Aorta (tissue), 5 donors: ENCODE measurements at regions of chr1 and their contacts with region 1.

Region 1: DNA sequence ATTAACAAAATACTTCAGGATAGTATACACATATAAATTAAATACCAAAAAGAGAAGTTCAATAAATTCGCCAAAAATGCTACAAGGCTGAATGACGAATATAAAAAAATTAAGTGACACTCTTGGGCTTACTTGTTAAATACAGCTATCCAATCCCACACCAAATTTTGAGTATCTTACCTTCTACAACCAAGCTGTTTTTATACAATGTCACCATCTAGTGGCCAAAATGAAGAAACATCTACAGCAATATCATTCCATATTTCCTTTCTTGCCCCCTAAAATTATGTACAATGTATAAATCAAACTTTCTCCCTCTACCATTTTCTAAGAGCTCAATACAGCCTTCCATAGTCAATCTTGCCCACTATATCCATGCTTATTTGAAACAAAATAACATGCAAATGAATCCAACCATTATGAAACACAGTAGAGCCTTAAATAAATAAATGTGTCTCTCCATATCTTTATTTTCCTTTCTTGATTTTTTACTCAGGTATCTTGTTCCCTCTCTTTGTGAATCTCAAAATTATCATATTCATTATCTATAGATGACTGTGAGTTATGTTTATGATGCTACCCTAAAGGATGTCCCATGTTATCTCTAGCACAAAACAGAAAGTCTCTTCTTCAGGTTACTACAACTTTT is 86.3 kb downstream of the ACBD6 start:
- DNase-seq: no peak
- ATAC-seq: no peak
- H3K4me3 ChIP-seq: no peak overlapping the region
- H3K27ac ChIP-seq: no peak overlapping the region
- H3K4me1 ChIP-seq: no peaks in the 10 kb centered on the region
- H3K27me3 ChIP-seq: no peaks in the 10 kb centered on the region

Region 2: DNA sequence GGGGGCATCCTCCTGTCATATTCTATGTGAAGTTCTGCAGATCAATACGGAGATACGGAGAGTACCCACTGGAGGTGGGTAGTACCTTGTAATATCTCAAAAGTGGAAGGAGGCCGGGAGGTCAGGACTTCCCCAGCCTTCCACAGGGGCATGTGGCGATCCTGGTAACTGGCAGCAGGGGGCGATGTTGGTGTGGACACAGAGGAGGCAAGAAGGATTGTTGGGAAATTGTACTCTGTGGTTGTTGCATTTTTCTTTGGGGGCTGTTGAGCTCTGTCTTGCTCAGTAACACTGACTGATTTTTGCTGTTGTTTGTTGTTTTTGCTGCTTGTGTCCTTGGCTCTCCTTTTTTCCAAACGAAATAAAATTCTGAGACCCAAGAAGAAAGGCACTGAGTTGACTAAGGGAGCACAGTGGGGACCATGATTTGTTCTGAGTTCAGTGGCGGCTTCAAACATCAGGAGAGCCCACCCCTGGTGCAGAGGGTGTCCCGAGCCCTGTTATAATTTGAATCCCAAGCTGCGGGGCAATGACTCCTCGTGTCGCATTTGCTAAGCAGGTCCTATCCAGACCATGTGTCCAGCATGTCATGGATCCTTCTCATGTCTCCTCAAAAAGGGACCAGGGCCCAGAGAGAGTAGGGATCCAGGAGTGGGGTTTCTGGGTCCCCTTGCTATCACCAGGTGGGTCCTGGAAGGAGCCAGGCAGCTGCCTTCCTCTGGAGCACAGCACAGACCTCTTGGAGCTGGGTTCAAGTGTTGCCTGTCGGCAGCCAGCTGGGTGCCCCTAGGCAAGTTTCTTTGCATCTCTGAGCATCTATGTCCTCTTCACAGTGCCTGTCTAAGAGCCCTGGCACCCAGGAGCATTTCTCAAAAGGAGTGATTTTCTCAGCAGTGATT is 163.2 kb before region 1 on chr1:
- intact Hi-C with region 1: loop called in 1 of 2 experiments (anchors 2 kb)
- DNase-seq: peak; percentile 87 to 88
- ATAC-seq: no peak
- H3K4me3 ChIP-seq: no peak overlapping the region
- H3K27ac ChIP-seq: no peak overlapping the region
- H3K4me1 ChIP-seq: no peaks in the 10 kb centered on the region
- H3K27me3 ChIP-seq: no peaks in the 10 kb centered on the region

Region 3: GRCh38 chr1:180527101-180527669 is 111.1 kb after region 1 on chr1:
- intact Hi-C with region 1: no loop called
- DNase-seq: no peak
- ATAC-seq: no peak
- H3K4me3 ChIP-seq: no peak overlapping the region
- H3K27ac ChIP-seq: peak overlapping the region; percentile 11 to 66
- H3K4me1 ChIP-seq: peaks cover 6 to 8% of the 10 kb centered on the region in 2 donors
- H3K27me3 ChIP-seq: no peaks in the 10 kb centered on the region

Region 4: GRCh38 chr1:180560868-180561600 is 144.9 kb after region 1 on chr1:
- intact Hi-C with region 1: no loop called
- DNase-seq: no peak
- ATAC-seq: no peak
- H3K4me3 ChIP-seq: no peak overlapping the region
- H3K27ac ChIP-seq: peak overlapping the region; percentile 8 to 97
- H3K4me1 ChIP-seq: peaks cover 10 to 12% of the 10 kb centered on the region in 2 donors
- H3K27me3 ChIP-seq: no peaks in the 10 kb centered on the region